Caco-2 (cell line): ENCODE measurements at regions of chr6 and their contacts with region 1.

Region 1: DNA sequence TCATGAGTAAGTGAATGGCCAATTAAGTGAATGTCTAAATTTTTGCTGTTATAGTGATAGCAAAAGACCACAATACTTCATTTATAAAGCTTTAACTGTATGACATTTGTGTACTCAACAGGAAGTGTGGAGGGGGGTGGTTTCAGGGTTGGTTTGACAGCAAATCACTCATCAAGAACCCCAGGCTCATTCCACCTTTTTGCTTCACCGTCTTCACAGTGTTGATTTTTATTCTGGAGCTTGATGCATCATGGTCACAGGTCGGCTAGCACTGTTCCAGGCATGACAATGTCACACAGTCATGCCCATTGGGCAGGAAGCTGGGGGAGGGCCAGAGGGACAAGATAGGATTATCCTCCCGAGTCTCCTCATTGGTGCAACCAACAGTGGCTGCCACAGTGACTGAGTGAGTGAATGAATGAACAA is 75.0 kb downstream of the MDGA1 start:
- DNase-seq: no peak
- H3K4me3 ChIP-seq: no peak overlapping the region
- H3K4me3 Mint-ChIP-seq: no peak overlapping the region
- H3K27ac Mint-ChIP-seq: no peak overlapping the region
- H3K4me1 ChIP-seq: no peaks in the 10 kb centered on the region
- H3K4me1 Mint-ChIP-seq: peaks cover 9% of the 10 kb centered on the region
- H3K27me3 ChIP-seq: no peaks in the 10 kb centered on the region
- H3K27me3 Mint-ChIP-seq: peaks cover 5% of the 10 kb centered on the region
- CTCF ChIP-seq: no peak

Region 2: GRCh38 chr6:37607944-37608343 is 14.7 kb before region 1 on chr6:
- CTCF ChIA-PET with region 1: no interaction called
- POLR2A ChIA-PET with region 1: no interaction called
- intact Hi-C with region 1: loop called (anchors 1 kb)
- DNase-seq: peak in 1 of 2 experiments; percentile 29
- H3K4me3 ChIP-seq: no peak overlapping the region
- H3K4me3 Mint-ChIP-seq: no peak overlapping the region
- H3K27ac Mint-ChIP-seq: no peak overlapping the region
- H3K4me1 ChIP-seq: no peaks in the 10 kb centered on the region
- H3K4me1 Mint-ChIP-seq: no peaks in the 10 kb centered on the region
- H3K27me3 ChIP-seq: no peaks in the 10 kb centered on the region
- H3K27me3 Mint-ChIP-seq: peaks cover 3% of the 10 kb centered on the region
- CTCF ChIP-seq: peak in 1 of 2 experiments; percentile 69

Region 3: GRCh38 chr6:37648465-37649330 is 26.0 kb after region 1 on chr6:
- CTCF ChIA-PET with region 1: no interaction called
- POLR2A ChIA-PET with region 1: no interaction called
- intact Hi-C with region 1: no loop called
- DNase-seq: peak in 1 of 2 experiments; percentile 57
- H3K4me3 ChIP-seq: no peak overlapping the region
- H3K4me3 Mint-ChIP-seq: no peak overlapping the region
- H3K27ac Mint-ChIP-seq: no peak overlapping the region
- H3K4me1 ChIP-seq: no peaks in the 10 kb centered on the region
- H3K4me1 Mint-ChIP-seq: no peaks in the 10 kb centered on the region
- H3K27me3 ChIP-seq: no peaks in the 10 kb centered on the region
- H3K27me3 Mint-ChIP-seq: no peaks in the 10 kb centered on the region
- CTCF ChIP-seq: no peak

Region 4: DNA sequence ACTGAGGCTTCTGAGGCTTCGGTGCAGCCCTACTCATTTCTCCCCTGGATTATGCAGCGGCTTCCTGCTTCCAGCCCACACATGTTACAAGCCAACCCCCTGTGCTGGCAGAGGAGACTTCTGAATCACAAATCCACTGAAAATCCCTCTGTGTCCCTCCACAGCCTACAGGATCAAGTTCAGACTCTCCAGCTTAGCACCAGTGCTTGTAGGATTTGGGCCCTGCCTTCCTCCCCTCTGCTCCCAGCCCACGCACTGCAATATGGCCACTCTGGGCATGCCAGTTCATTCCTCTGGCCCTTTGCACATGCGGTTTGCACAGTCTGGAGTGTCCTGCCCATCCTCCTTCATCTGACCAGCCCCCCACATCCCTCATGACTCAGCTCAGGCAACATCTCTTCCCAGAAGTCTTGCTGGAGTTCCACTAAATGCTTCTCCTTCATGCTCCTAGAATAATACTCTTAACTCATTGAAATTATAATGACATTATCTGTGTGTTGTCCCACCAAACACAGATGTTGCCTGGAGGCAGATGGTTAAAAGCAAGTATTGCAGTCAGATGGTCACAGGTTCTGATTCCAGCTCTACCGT is 91.0 kb after region 1 on chr6:
- CTCF ChIA-PET with region 1: no interaction called
- POLR2A ChIA-PET with region 1: no interaction called
- intact Hi-C with region 1: no loop called
- DNase-seq: no peak
- H3K4me3 ChIP-seq: no peak overlapping the region
- H3K4me3 Mint-ChIP-seq: no peak overlapping the region
- H3K27ac Mint-ChIP-seq: no peak overlapping the region
- H3K4me1 ChIP-seq: peaks cover 5% of the 10 kb centered on the region; the same call in 1 of the 2 replicates
- H3K4me1 Mint-ChIP-seq: no peaks in the 10 kb centered on the region
- H3K27me3 ChIP-seq: no peaks in the 10 kb centered on the region
- H3K27me3 Mint-ChIP-seq: peaks cover 4% of the 10 kb centered on the region
- CTCF ChIP-seq: no peak